Aorta (tissue), 5 donors: ENCODE measurements at regions of chr15 and their contacts with region 1.

Region 1: GRCh38 chr15:90071208-90071807 is 31.0 kb downstream of the IDH2 start:
- DNase-seq: peak; percentile 88 to 93
- ATAC-seq: peak; percentile 84
- H3K4me3 ChIP-seq: no peak overlapping the region
- H3K27ac ChIP-seq: no peak overlapping the region
- H3K4me1 ChIP-seq: no peaks in the 10 kb centered on the region
- H3K27me3 ChIP-seq: no peaks in the 10 kb centered on the region

Region 2: GRCh38 chr15:89740137-89740536 is 331.2 kb before region 1 on chr15:
- intact Hi-C with region 1: loop called in 1 of 2 experiments (anchors 10 kb)
- DNase-seq: no peak
- ATAC-seq: peak; percentile 79
- H3K4me3 ChIP-seq: no peak overlapping the region
- H3K27ac ChIP-seq: no peak overlapping the region
- H3K4me1 ChIP-seq: no peaks in the 10 kb centered on the region
- H3K27me3 ChIP-seq: no peaks in the 10 kb centered on the region

Region 3: GRCh38 chr15:89760303-89761008 is 310.9 kb before region 1 on chr15:
- intact Hi-C with region 1: loop called in 1 of 2 experiments (anchors 10 kb)
- DNase-seq: peak; percentile 82 to 94
- ATAC-seq: peak; percentile 91
- H3K4me3 ChIP-seq: no peak overlapping the region
- H3K27ac ChIP-seq: no peak overlapping the region
- H3K4me1 ChIP-seq: no peaks in the 10 kb centered on the region
- H3K27me3 ChIP-seq: no peaks in the 10 kb centered on the region

Region 4: GRCh38 chr15:90001683-90002427 is 69.5 kb before region 1 on chr15:
- intact Hi-C with region 1: loop called in 1 of 2 experiments (anchors 2 kb)
- DNase-seq: peak; percentile 83 to 88
- ATAC-seq: peak; percentile 27
- H3K4me3 ChIP-seq: peak overlapping the region; percentile 82 to 99
- H3K27ac ChIP-seq: peak overlapping the region in 1 of 2 donors; percentile 2
- H3K4me1 ChIP-seq: no peaks in the 10 kb centered on the region
- H3K27me3 ChIP-seq: no peaks in the 10 kb centered on the region

Region 5: GRCh38 chr15:90138071-90138833 is 66.9 kb after region 1 on chr15:
- intact Hi-C with region 1: no loop called
- DNase-seq: peak in 1 of 2 donors; percentile 57
- ATAC-seq: no peak
- H3K4me3 ChIP-seq: no peak overlapping the region
- H3K27ac ChIP-seq: no peak overlapping the region
- H3K4me1 ChIP-seq: no peaks in the 10 kb centered on the region
- H3K27me3 ChIP-seq: no peaks in the 10 kb centered on the region